Sigmoid colon (tissue), 7 donors: ENCODE measurements at regions of chr14 and their contacts with region 1.

Region 1: GRCh38 chr14:55270832-55271565 is at the start of gene FBXO34:
- DNase-seq: peak; percentile 99
- H3K4me3 ChIP-seq: peak within 1 kb of the TSS; percentile 94 to 98 (median 98)
- H3K27ac ChIP-seq: peak within 1 kb of the TSS; percentile 88 to 91 (median 90)
- H3K4me1 ChIP-seq: peaks cover 0 to 48% (median 35%) of the 10 kb centered on the region in 4 donors
- H3K27me3 ChIP-seq: no peaks in the 10 kb centered on the region
- CTCF ChIP-seq: peak; percentile 95 to 100 (median 99)
- EP300 ChIP-seq: peak in 2 of 4 donors; percentile 11 to 37
- POLR2A ChIP-seq: peak; percentile 21 to 60
- total RNA-seq, gene FBXO34: 15.3 to 18.6 (median 17.5) TPM

Region 2: GRCh38 chr14:55285048-55285652 is 14.2 kb after region 1 on chr14:
- intact Hi-C with region 1: no loop called
- DNase-seq: no peak
- H3K4me3 ChIP-seq: peak overlapping the region in 2 of 4 donors; percentile 5 to 9
- H3K27ac ChIP-seq: peak overlapping the region in 1 of 4 donors; percentile 28
- H3K4me1 ChIP-seq: peaks cover 0 to 24% (median 14%) of the 10 kb centered on the region in 4 donors
- H3K27me3 ChIP-seq: no peaks in the 10 kb centered on the region
- CTCF ChIP-seq: no peak
- EP300 ChIP-seq: no peak
- POLR2A ChIP-seq: no peak

Region 3: GRCh38 chr14:55354500-55354899 is 83.5 kb after region 1 on chr14:
- intact Hi-C with region 1: loop called (anchors 2 kb)
- DNase-seq: peak; percentile 70
- H3K4me3 ChIP-seq: no peak overlapping the region
- H3K27ac ChIP-seq: no peak overlapping the region
- H3K4me1 ChIP-seq: peaks cover 0 to 7% (median 3%) of the 10 kb centered on the region in 4 donors
- H3K27me3 ChIP-seq: no peaks in the 10 kb centered on the region
- CTCF ChIP-seq: peak in 3 of 4 experiments; percentile 47 to 62 (median 51)
- EP300 ChIP-seq: no peak
- POLR2A ChIP-seq: no peak

Region 4: GRCh38 chr14:55411426-55412389 is 140.7 kb after region 1 on chr14 and contains the start of gene ATG14:
- intact Hi-C with region 1: loop called (anchors 5 kb)
- DNase-seq: peak; percentile 92
- H3K4me3 ChIP-seq: peak within 1 kb of the TSS; percentile 77 to 87 (median 84)
- H3K27ac ChIP-seq: peak within 1 kb of the TSS; percentile 81 to 91 (median 85)
- H3K4me1 ChIP-seq: peaks cover 0 to 23% (median 19%) of the 10 kb centered on the region in 4 donors
- H3K27me3 ChIP-seq: no peaks in the 10 kb centered on the region
- CTCF ChIP-seq: no peak
- EP300 ChIP-seq: no peak
- POLR2A ChIP-seq: peak in 1 of 2 donors; percentile 18
- total RNA-seq, gene ATG14: 17.1 to 22.2 (median 19.1) TPM

Region 5: DNA sequence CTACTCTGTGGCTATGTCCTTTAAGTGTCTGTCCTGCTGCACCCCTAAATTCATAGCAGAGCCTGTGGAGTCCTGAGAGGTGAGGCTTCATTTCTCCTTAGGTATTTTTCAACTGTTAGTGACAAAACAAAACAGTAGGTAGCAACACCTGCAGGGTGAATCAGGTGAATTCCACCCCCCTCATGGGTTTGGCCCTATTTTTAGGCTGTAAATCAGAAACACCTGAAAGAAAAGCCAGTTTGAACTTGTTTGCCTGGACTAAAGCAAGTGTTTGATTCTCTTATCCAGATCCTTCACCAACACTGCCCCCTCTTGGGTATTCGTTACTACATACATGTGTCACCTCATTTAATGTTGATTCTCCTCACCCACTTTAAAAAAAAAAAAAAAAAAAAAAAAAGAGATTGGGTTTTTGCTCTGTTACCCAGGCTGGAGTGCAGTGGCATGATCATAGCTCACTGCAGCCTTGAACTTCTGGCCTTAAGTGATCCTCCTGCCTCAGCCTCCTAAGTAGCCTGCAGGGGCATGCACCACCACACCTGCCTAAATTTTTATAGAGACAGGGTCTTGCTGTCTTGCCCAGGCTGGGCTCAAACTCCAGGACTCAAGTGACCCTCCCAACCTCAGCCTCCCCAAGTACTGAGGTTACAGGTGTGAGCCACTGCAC is 159.2 kb after region 1 on chr14:
- intact Hi-C with region 1: loop called (anchors 5 kb)
- DNase-seq: no peak
- H3K4me3 ChIP-seq: no peak overlapping the region
- H3K27ac ChIP-seq: no peak overlapping the region
- H3K4me1 ChIP-seq: no peaks in the 10 kb centered on the region
- H3K27me3 ChIP-seq: no peaks in the 10 kb centered on the region
- CTCF ChIP-seq: peak in 1 of 4 experiments; percentile 33
- EP300 ChIP-seq: no peak
- POLR2A ChIP-seq: no peak

Region 6: GRCh38 chr14:55579724-55580469 is 308.9 kb after region 1 on chr14 and contains the start of gene KTN1:
- intact Hi-C with region 1: loop called (anchors 10 kb)
- DNase-seq: peak; percentile 90
- H3K4me3 ChIP-seq: peak within 1 kb of the TSS; percentile 88 to 95 (median 94)
- H3K27ac ChIP-seq: peak within 1 kb of the TSS; percentile 95 to 99 (median 96)
- H3K4me1 ChIP-seq: peaks cover 0 to 43% (median 37%) of the 10 kb centered on the region in 4 donors
- H3K27me3 ChIP-seq: no peaks in the 10 kb centered on the region
- CTCF ChIP-seq: no peak
- EP300 ChIP-seq: no peak
- POLR2A ChIP-seq: no peak
- total RNA-seq, gene KTN1: 120 to 174 (median 150) TPM